ENCODE measurements at regions of chr10 and their contacts with region 1.

Region 1: DNA sequence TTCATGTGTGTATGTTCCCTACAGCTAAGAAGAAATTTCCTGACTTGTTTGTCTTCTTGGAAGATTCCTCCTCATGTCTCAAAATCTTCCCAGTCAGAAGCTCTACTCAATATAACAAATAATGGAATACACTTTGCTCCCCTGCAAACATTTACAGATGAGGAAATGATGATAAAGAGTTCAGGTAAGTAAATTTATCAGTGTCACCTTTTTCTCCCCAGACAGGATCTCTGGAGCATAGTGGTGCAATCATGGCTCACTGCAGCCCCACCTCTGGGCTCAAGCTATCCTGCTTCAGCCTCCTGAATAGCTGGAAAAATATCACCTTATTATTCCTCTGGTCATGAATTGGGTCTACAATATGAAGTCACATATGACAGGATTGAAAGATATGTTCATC is 25.5 kb downstream of the ACADSB start:
- H3K4me3 ChIP-seq: no peak overlapping the region
- H3K27ac ChIP-seq: no peak overlapping the region
- H3K4me1 ChIP-seq: no peaks in the 10 kb centered on the region
- CTCF ChIP-seq: no peak

Region 2: GRCh38 chr10:122749886-122750285 is 284.4 kb before region 1 on chr10:
- CTCF ChIA-PET with region 1: no interaction called
- POLR2A ChIA-PET with region 1: no interaction called
- H3K4me3 ChIP-seq: no peak overlapping the region
- H3K27ac ChIP-seq: no peak overlapping the region
- H3K4me1 ChIP-seq: no peaks in the 10 kb centered on the region
- CTCF ChIP-seq: no peak

Region 3: GRCh38 chr10:123021517-123021916 is 12.8 kb before region 1 on chr10:
- CTCF ChIA-PET with region 1: interaction called, 17 read pairs
- POLR2A ChIA-PET with region 1: no interaction called
- H3K4me3 ChIP-seq: no peak overlapping the region
- H3K27ac ChIP-seq: no peak overlapping the region
- H3K4me1 ChIP-seq: peaks cover 4% of the 10 kb centered on the region
- CTCF ChIP-seq: no peak

Measured in HEK293 (cell line).